PC-3 (cell line): ENCODE measurements at regions of chr5 and their contacts with region 1.

Region 1: GRCh38 chr5:142872795-142873194 is 102.6 kb downstream of the ARHGAP26 start:
- DNase-seq: peak; percentile 88
- ATAC-seq: peak; percentile 85
- H3K4me3 ChIP-seq: no peak overlapping the region
- H3K27ac ChIP-seq: peak overlapping the region; percentile 89
- H3K4me1 ChIP-seq: peaks cover 47% of the 10 kb centered on the region
- H3K27me3 ChIP-seq: no peaks in the 10 kb centered on the region
- CTCF ChIP-seq: no peak

Region 2: DNA sequence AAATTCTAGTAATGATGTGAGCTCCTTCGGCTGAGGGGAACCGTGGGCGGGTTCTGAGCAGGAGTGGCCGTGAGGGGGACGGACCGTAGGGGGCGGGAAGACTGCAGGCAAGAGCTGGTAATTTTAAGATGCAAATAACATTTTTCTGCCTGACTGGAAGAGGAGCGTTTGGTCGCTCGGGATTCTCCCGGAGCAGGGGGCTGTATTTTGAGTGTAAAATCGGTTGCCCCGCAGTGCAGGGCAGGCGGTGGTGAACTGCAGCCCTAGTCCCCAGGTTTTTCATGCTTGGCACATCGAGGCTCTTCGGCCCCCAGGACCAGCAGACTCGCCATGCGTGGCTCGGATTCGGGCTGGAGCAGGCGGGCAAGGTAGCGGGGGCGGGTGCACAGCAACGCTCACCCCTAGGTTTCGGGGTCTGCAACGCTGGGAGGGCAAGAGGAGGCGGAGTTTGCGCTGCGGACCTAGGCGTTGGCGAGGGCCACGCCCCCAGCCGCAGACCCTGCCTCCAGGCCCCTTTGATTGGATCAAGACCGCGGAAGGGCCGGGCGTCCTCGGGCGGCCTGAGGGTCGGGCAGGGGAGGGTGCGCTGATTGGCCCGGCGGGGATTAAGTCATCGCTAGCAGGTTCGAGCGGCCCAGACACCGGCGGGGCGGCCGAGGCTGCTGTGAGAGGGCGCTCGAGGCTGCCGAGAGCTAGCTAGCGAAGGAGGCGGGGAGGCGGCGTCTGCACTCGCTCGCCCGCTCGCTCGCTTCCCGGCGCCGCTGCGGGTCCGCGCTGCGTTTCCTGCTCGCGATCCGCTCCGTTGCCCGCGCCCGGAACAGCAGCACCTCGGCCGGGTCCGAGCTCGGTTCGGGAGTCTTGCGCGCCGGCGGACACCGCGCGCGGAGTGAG is 102.8 kb before region 1 on chr5 and contains the start of gene ARHGAP26:
- CTCF ChIA-PET with region 1: interaction called, 4 read pairs
- POLR2A ChIA-PET with region 1: interaction called, 4 read pairs
- intact Hi-C with region 1: loop called (anchors 1 kb)
- DNase-seq: peak; percentile 92
- ATAC-seq: peak; percentile 94
- H3K4me3 ChIP-seq: peak within 1 kb of the TSS; percentile 97
- H3K27ac ChIP-seq: peak within 1 kb of the TSS; percentile 29
- H3K4me1 ChIP-seq: peaks cover 19% of the 10 kb centered on the region
- H3K27me3 ChIP-seq: no peaks in the 10 kb centered on the region
- CTCF ChIP-seq: no peak
- total RNA-seq, gene ARHGAP26: 6.2 and 11.7 TPM in 2 replicates

Region 3: GRCh38 chr5:142847881-142848790 is 24.7 kb before region 1 on chr5:
- CTCF ChIA-PET with region 1: no interaction called
- POLR2A ChIA-PET with region 1: no interaction called
- intact Hi-C with region 1: no loop called
- DNase-seq: no peak
- ATAC-seq: no peak
- H3K4me3 ChIP-seq: no peak overlapping the region
- H3K27ac ChIP-seq: no peak overlapping the region
- H3K4me1 ChIP-seq: peaks cover 23% of the 10 kb centered on the region
- H3K27me3 ChIP-seq: no peaks in the 10 kb centered on the region
- CTCF ChIP-seq: no peak